ENCODE measurements at regions of chr1 and their contacts with region 1.

Region 1: GRCh38 chr1:30743584-30744059 is 14.0 kb downstream of the LAPTM5 start:
- DNase-seq: peak; percentile 88
- ATAC-seq: peak; percentile 79
- H3K4me3 ChIP-seq: peak overlapping the region in 4 of 5 experiments; percentile 16 to 62 (median 28)
- H3K4me3 Mint-ChIP-seq: peak overlapping the region; percentile 78
- H3K27ac ChIP-seq: peak overlapping the region; percentile 98 to 100
- H3K27ac Mint-ChIP-seq: peak overlapping the region; percentile 87
- H3K4me1 ChIP-seq: peaks cover 84 to 99% of the 10 kb centered on the region in 2 donors
- H3K4me1 Mint-ChIP-seq: peaks cover 99% of the 10 kb centered on the region
- H3K27me3 ChIP-seq: no peaks in the 10 kb centered on the region
- H3K27me3 Mint-ChIP-seq: no peaks in the 10 kb centered on the region
- CTCF ChIP-seq: no peak

Region 2: GRCh38 chr1:30756545-30757195 is 13.0 kb after region 1 on chr1:
- CTCF ChIA-PET with region 1: interaction called, 769 read pairs
- POLR2A ChIA-PET with region 1: interaction called, 152 read pairs
- intact Hi-C with region 1: loop called (anchors 1 kb)
- DNase-seq: peak; percentile 87
- ATAC-seq: peak; percentile 19
- H3K4me3 ChIP-seq: peak overlapping the region; percentile 80 to 97 (median 95)
- H3K4me3 Mint-ChIP-seq: peak overlapping the region; percentile 92
- H3K27ac ChIP-seq: peak overlapping the region; percentile 98 to 100
- H3K27ac Mint-ChIP-seq: peak overlapping the region; percentile 92
- H3K4me1 ChIP-seq: peaks cover 62 to 87% of the 10 kb centered on the region in 2 donors
- H3K4me1 Mint-ChIP-seq: peaks cover 78% of the 10 kb centered on the region
- H3K27me3 ChIP-seq: no peaks in the 10 kb centered on the region
- H3K27me3 Mint-ChIP-seq: no peaks in the 10 kb centered on the region
- CTCF ChIP-seq: no peak

Region 3: DNA sequence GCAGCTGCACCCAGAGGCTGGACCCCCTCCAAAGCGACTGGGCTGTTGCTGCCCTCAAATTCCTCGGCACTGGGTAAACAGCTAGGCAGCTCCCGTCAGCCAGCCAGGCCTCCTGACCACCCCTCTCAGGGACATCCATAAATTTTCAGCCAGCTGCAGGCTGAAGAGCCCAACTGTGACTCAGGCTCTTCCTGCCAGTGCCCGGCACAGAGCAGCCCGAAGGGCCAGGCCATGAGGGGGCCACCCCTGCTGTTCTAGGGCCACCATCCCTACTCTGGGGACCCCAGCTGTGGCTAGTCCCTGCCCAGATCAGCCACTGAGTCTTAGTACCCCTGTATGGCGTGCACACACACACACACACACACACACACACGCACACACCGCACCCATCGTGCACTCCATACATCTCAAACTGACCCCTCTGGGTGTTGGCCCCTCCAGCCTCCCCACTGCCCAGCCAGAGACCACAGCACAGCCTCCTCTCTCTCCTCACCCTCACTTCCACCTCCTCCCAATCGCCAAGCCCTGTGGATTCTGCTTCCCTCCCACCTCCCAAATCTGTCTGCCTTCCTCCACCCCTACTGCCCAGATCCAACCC is 20.1 kb after region 1 on chr1:
- CTCF ChIA-PET with region 1: interaction called, 769 read pairs
- POLR2A ChIA-PET with region 1: interaction called, 152 read pairs
- intact Hi-C with region 1: loop called (anchors 2 kb)
- DNase-seq: no peak
- ATAC-seq: no peak
- H3K4me3 ChIP-seq: no peak overlapping the region
- H3K4me3 Mint-ChIP-seq: no peak overlapping the region
- H3K27ac ChIP-seq: peak overlapping the region in 1 of 2 donors; percentile 98
- H3K27ac Mint-ChIP-seq: peak overlapping the region; percentile 95
- H3K4me1 ChIP-seq: peaks cover 58 to 67% of the 10 kb centered on the region in 2 donors
- H3K4me1 Mint-ChIP-seq: peaks cover 75% of the 10 kb centered on the region
- H3K27me3 ChIP-seq: no peaks in the 10 kb centered on the region
- H3K27me3 Mint-ChIP-seq: no peaks in the 10 kb centered on the region
- CTCF ChIP-seq: no peak

Region 4: GRCh38 chr1:31970873-31971272 is 1227.3 kb after region 1 on chr1:
- CTCF ChIA-PET with region 1: no interaction called
- POLR2A ChIA-PET with region 1: interaction called, 12 read pairs
- intact Hi-C with region 1: no loop called
- DNase-seq: no peak
- ATAC-seq: no peak
- H3K4me3 ChIP-seq: no peak overlapping the region
- H3K4me3 Mint-ChIP-seq: no peak overlapping the region
- H3K27ac ChIP-seq: no peak overlapping the region
- H3K27ac Mint-ChIP-seq: no peak overlapping the region
- H3K4me1 ChIP-seq: no peaks in the 10 kb centered on the region
- H3K4me1 Mint-ChIP-seq: no peaks in the 10 kb centered on the region
- H3K27me3 ChIP-seq: no peaks in the 10 kb centered on the region
- H3K27me3 Mint-ChIP-seq: no peaks in the 10 kb centered on the region
- CTCF ChIP-seq: no peak